ENCODE measurements at regions of chr5 and their contacts with region 1.

Region 1: GRCh38 chr5:163437309-163438182 is at the start of gene CCNG1:
- DNase-seq: peak; percentile 97
- H3K4me3 ChIP-seq: peak within 1 kb of the TSS; percentile 90 to 98 (median 95)
- H3K27ac ChIP-seq: peak within 1 kb of the TSS; percentile 87 to 95
- H3K4me1 ChIP-seq: peaks cover 7 to 43% (median 36%) of the 10 kb centered on the region in 4 experiments
- H3K27me3 ChIP-seq: no peaks in the 10 kb centered on the region

Region 2: DNA sequence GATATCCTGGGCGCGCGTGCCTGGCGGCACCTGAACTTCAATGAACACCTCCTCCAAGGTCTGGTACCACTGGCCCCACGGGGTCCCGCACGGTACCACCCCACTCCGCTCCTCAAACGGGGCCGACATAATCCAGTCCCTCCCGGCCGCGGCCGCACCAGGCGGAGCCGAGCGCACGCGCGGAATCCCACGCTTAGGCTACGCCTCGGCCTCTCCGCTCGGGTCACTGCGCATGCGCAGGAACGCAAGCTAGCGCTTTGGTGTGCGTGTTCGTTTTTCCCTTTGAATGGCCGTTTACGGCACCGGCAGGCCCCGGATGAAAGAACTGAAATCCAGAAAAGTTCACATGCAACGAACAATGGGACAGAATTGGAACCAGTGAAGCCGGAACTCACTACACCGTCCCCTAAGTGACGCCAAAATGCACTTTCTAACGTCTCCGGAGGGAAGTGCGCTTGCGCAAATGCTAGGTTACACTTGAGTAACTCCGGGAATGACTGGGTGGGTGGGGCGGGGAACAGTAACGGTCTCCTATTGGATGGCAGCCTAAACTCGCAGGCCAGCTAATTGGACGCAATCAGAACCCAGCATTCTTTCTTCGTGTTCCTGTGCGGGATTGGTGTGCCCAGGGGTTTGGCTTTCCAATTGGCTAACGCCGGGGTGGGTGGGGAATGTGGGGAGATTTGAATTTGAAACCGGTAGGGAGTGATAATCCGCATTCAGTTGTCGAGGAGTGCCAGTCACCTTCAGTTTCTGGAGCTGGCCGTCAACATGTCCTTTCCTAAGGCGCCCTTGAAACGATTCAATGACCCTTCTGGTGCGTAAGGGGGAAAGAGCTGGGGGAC is 22.6 kb after region 1 on chr5 and contains the starts of genes HMMR and NUDCD2:
- CTCF ChIA-PET with region 1: interaction called, 17 read pairs
- POLR2A ChIA-PET with region 1: interaction called, 10 read pairs
- DNase-seq: peak; percentile 99
- H3K4me3 ChIP-seq: peak within 1 kb of the TSS; percentile 82 to 96 (median 88)
- H3K27ac ChIP-seq: peak within 1 kb of the TSS; percentile 93 to 98
- H3K4me1 ChIP-seq: peaks cover 18 to 36% (median 28%) of the 10 kb centered on the region in 4 experiments
- H3K27me3 ChIP-seq: no peaks in the 10 kb centered on the region

Measured in common myeloid progenitor, CD34-positive (primary cell).